GM10248 (cell line): ENCODE measurements at regions of chr6 and their contacts with region 1.

Region 1: DNA sequence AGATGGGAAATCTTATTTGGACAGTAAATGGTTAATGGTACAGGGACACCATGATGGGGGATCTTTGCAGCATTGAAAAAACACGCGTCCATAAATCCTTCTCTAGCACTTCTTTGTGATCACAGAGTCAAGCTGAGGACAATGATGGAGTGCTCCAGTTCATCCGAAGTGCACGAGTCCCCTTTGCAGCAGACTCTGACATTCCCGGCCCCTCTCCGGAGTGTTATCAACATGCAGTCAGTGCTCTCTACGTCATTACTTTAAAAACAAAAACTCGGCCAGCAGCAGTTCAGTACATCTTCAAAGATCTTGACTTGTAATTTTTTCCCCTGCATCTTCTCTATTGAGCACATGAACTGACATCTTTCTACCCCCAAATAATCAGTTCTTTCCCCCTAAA is 185.5 kb upstream of the AKAP12 start:
- DNase-seq: no peak
- CTCF ChIP-seq: no peak

Region 2: GRCh38 chr6:151067684-151068596 is 13.6 kb after region 1 on chr6:
- CTCF ChIA-PET with region 1: interaction called, 11 read pairs
- POLR2A ChIA-PET with region 1: no interaction called
- DNase-seq: no peak
- CTCF ChIP-seq: no peak

Region 3: GRCh38 chr6:151247490-151247889 is 193.2 kb after region 1 on chr6:
- CTCF ChIA-PET with region 1: no interaction called
- POLR2A ChIA-PET with region 1: no interaction called
- DNase-seq: no peak
- CTCF ChIP-seq: no peak